ENCODE measurements at regions of chr19 and their contacts with region 1.

Region 1: DNA sequence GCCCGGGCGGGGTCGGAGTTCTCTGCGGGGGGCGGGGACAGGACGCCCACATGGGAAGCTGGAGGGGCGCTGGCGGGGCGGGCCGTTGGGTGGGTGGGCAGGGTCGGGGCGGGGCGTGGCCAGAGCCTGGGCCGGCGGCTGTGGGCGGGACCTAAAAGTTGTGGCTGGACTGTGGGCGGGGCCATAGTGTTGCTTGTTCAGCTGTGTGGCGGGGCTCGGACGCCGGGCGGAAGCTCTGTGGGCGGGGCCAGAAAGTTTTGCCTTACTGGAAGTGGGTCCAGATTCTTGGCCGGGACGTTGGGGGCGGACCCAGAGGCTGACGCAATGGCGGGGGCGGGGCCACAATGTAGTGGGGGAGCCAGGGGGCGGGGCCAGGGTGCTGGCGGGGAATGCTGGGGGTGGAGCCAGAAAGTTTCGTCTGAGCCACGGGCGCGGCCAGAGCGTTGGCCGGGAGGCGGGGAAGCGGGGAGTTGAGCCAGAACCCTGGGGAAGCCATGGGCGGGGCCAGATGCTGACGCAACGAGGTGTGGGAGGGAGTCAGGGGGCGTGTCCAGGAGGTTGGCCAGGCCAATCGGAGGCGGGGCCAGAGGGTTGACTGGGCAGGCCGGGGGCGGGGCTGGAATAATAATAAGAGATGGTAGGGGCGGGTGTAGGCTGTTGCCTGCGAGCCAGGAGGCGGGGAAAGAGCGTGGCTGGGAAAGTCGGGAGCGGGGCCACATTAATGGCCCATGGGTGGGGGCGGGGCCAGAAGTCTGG is 541 bp downstream of the CCDC9 start:
- DNase-seq: peak; percentile 99 to 100
- H3K4me3 ChIP-seq: peak overlapping the region; percentile 64 to 72
- H3K27ac ChIP-seq: peak overlapping the region; percentile 96 to 98
- H3K4me1 ChIP-seq: peaks cover 0 to 29% of the 10 kb centered on the region in 2 donors
- H3K27me3 ChIP-seq: no peaks in the 10 kb centered on the region
- CTCF ChIP-seq: no peak

Region 2: DNA sequence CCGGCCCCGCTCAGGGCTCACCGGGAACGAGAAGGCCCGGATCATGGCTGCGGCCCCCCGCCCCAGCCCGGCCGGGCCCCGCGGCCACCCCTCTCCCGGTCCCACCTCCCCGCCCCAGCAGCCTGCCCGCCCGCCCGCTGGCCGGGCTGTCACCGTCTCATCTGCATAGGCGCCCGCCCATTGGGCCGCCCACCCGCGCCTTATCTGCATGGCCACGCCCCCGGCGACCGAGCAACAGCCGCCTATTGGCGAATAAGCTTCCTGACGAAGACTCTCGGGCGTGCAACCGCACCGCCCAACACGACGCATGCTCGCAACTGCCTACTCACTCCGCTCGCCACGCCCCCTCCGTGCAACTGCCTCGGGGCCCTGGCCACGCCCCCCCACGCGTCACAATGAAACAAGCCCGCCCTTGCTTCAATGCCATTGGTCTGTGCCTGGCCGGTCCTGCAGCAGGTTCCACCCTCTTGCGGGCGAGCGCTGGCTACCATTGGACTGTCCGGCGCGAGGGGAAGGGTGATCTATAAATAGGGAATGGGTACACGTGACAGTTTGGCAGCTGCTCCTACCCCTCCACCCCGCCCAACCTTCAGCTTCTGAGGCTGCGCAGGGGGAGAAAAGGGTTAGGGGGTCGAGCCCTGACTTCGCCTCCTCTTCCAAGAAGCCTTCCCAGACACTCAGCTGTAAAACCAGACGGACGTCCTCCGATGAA is 595.7 kb before region 1 on chr19 and contains the start of gene DACT3:
- intact Hi-C with region 1: loop called (anchors 1 kb)
- DNase-seq: peak; percentile 100
- H3K4me3 ChIP-seq: peak within 1 kb of the TSS; percentile 70 to 96
- H3K27ac ChIP-seq: peak within 1 kb of the TSS; percentile 87 to 96
- H3K4me1 ChIP-seq: peaks cover 6 to 13% of the 10 kb centered on the region in 2 donors
- H3K27me3 ChIP-seq: no peaks in the 10 kb centered on the region
- CTCF ChIP-seq: no peak
- total RNA-seq, gene DACT3: 104 TPM

Region 3: GRCh38 chr19:46860125-46860845 is 396.6 kb before region 1 on chr19:
- intact Hi-C with region 1: loop called (anchors 2 kb)
- DNase-seq: peak; percentile 94 to 99
- H3K4me3 ChIP-seq: peak overlapping the region; percentile 85 to 87
- H3K27ac ChIP-seq: peak overlapping the region; percentile 97 to 100
- H3K4me1 ChIP-seq: peaks cover 12 to 32% of the 10 kb centered on the region in 2 donors
- H3K27me3 ChIP-seq: no peaks in the 10 kb centered on the region
- CTCF ChIP-seq: no peak

Region 4: DNA sequence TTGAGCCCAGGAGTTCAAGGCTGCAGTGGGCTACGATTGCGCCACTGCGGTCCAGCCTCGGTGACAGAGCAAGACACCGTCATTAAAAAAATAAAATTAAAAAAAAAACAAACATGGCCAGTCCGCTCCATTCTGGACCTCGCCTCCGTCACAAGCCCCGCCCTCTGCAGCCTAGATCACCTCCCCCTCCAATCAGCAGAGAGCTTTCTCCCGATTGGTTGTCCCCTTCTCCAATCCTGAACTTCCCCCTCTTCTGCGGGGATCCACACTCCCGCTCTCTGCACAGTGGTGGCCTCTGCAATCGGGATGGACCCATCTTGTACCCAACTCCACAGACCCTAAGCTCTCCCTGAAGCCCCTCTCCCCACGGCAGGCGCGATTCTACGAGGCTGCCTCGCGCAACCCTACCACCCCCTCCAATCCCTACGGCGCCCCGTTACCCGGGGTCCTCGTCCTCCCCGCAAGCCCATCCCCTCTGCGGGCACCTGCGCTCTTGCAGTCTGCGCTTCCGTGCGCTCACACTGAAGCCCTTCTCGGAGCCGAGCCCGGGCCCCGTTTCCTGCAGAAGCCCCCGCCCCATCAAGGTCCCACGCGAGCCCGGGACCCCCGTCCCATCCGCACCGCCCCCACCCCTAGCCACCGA is 209.0 kb before region 1 on chr19:
- intact Hi-C with region 1: loop called (anchors 1 kb)
- DNase-seq: peak; percentile 58 to 89
- H3K4me3 ChIP-seq: peak overlapping the region; percentile 77 to 83
- H3K27ac ChIP-seq: peak overlapping the region; percentile 80
- H3K4me1 ChIP-seq: peaks cover 0 to 4% of the 10 kb centered on the region in 2 donors
- H3K27me3 ChIP-seq: no peaks in the 10 kb centered on the region
- CTCF ChIP-seq: no peak

Region 5: GRCh38 chr19:47112997-47113849 is 143.6 kb before region 1 on chr19 and contains the start of gene ZC3H4:
- intact Hi-C with region 1: loop called (anchors 1 kb)
- DNase-seq: peak; percentile 98 to 99
- H3K4me3 ChIP-seq: peak within 1 kb of the TSS; percentile 87 to 97
- H3K27ac ChIP-seq: peak within 1 kb of the TSS; percentile 100
- H3K4me1 ChIP-seq: peaks cover 0 to 12% of the 10 kb centered on the region in 2 donors
- H3K27me3 ChIP-seq: no peaks in the 10 kb centered on the region
- CTCF ChIP-seq: no peak
- total RNA-seq, gene ZC3H4: 24.6 TPM

Region 6: GRCh38 chr19:47225746-47226425 is 31.0 kb before region 1 on chr19:
- intact Hi-C with region 1: loop called (anchors 1 kb)
- DNase-seq: peak in 1 of 2 donors; percentile 92
- H3K4me3 ChIP-seq: peak overlapping the region; percentile 88 to 91
- H3K27ac ChIP-seq: peak overlapping the region; percentile 100
- H3K4me1 ChIP-seq: peaks cover 12 to 24% of the 10 kb centered on the region in 2 donors
- H3K27me3 ChIP-seq: no peaks in the 10 kb centered on the region
- CTCF ChIP-seq: peak in 2 of 3 experiments; percentile 19 to 77

Region 7: DNA sequence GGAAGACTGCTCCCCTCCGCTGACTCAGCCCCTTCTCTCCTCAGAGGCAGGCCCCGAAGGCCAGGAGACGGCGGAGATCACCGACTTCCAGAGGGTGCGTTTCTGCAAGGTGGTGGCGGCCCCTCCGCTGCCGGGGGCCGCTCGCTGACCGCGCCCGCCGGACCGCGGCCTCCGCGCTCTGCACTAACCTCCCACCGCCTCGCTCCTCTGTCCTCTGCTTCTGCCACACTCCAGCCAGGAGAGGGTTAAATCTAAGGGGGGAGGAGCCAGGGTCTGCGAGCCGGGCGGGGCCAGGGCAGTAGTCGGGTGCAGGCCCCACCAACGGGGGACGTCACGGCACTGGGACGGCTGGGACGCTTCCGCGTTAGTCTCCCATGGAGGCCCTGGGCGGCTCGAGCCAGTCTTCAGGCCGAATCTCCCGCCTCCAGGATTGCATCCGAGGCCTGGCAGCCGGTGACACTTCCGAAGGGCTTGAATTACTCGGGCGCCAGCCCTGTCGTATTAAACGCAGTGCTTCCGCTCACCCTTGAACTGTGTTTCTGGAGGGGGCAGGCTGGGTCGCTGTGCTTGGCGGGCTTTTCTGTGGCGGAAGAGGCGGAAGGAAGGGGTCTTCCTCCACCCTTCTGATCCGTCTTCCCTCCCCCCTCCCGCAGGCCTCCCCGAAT is 16.6 kb after region 1 on chr19:
- intact Hi-C with region 1: loop called (anchors 1 kb)
- DNase-seq: peak; percentile 77 to 97
- H3K4me3 ChIP-seq: peak overlapping the region; percentile 77 to 87
- H3K27ac ChIP-seq: peak overlapping the region; percentile 99
- H3K4me1 ChIP-seq: peaks cover 7 to 32% of the 10 kb centered on the region in 2 donors
- H3K27me3 ChIP-seq: no peaks in the 10 kb centered on the region
- CTCF ChIP-seq: no peak